H1 (cell line): ENCODE measurements at regions of chr2 and their contacts with region 1.

Region 1: GRCh38 chr2:71117063-71117462 is 13.0 kb downstream of the MCEE start:
- DNase-seq: no peak
- H3K4me3 ChIP-seq: no peak overlapping the region
- H3K27ac ChIP-seq: no peak overlapping the region
- H3K4me1 ChIP-seq: no peaks in the 10 kb centered on the region; a peak in 1 of 7 replicates
- H3K27me3 ChIP-seq: no peaks in the 10 kb centered on the region
- CTCF ChIP-seq: no peak
- EP300 ChIP-seq: no peak
- POLR2A ChIP-seq: no peak
- RAD21 ChIP-seq: no peak

Region 2: DNA sequence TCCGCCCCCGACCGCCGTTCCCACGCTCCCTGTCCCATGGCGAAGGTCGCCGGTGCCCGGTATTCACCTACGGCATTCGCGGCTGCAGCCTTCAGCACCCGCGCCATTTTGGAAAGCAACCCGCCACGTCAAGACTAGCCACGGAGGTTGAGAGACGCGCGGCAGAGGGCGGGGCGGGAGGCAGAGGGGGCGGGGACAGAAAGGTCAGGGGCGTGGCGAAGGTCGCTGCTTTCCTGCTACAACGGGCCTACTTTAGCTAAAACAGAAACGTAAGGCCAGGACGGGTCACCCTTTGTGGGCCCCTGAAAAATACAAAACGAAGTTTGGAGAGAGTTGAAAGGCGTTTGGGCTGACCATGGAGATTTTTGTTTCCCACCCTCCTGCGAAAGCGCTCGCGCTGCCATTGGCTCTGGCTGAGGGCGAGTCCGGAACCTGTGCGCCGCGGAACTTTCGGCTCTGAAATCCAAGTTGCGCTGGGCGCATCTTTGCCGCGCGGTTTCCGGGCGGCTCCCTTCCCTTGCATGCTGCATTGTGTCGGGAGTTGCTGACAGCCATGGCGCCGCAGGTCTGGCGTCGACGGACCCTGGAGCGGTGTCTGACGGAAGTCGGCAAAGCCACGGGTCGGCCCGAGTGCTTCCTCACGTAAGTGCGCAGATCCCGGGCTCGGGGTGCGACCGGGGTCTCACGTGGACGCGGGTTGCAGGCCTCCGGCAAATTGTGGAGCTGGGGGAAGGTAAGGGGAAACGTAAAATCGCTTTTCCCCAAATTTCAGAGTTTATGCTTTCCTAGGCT is 13.2 kb after region 1 on chr2 and contains the starts of genes MCEE and MPHOSPH10:
- CTCF ChIA-PET with region 1: no interaction called
- POLR2A ChIA-PET with region 1: interaction called, 17 read pairs
- DNase-seq: peak; percentile 83 to 94
- H3K4me3 ChIP-seq: peak within 1 kb of the TSS; percentile 83 to 98 (median 92)
- H3K27ac ChIP-seq: peak within 1 kb of the TSS; percentile 80
- H3K4me1 ChIP-seq: no peaks in the 10 kb centered on the region
- H3K27me3 ChIP-seq: no peaks in the 10 kb centered on the region
- CTCF ChIP-seq: peak in 1 of 3 experiments; percentile 0; a peak in 1 of 4 replicates
- EP300 ChIP-seq: no peak
- POLR2A ChIP-seq: peak; percentile 79 to 88
- RAD21 ChIP-seq: peak in 1 of 2 experiments; percentile 9; a peak in 2 of 4 replicates
- total RNA-seq, gene MCEE: 14.1 and 15.5 TPM in 2 replicates
- total RNA-seq, gene MPHOSPH10: 39.1 and 42.8 TPM in 2 replicates